ENCODE measurements at regions of chr7 and their contacts with region 1.

Region 1: GRCh38 chr7:85972504-85973141 is 671.1 kb upstream of the GRM3 start:
- DNase-seq: no peak
- ATAC-seq: no peak
- H3K4me3 ChIP-seq: no peak overlapping the region
- H3K27ac ChIP-seq: no peak overlapping the region
- H3K4me1 ChIP-seq: no peaks in the 10 kb centered on the region
- H3K27me3 ChIP-seq: no peaks in the 10 kb centered on the region
- CTCF ChIP-seq: no peak
- POLR2A ChIP-seq: no peak
- RAD21 ChIP-seq: no peak

Region 2: GRCh38 chr7:85829817-85830432 is 142.7 kb before region 1 on chr7:
- CTCF ChIA-PET with region 1: no interaction called
- POLR2A ChIA-PET with region 1: no interaction called
- RAD21 ChIA-PET with region 1: no interaction called
- intact Hi-C with region 1: no loop called
- DNase-seq: no peak
- ATAC-seq: peak; percentile 63
- H3K4me3 ChIP-seq: no peak overlapping the region
- H3K27ac ChIP-seq: no peak overlapping the region
- H3K4me1 ChIP-seq: no peaks in the 10 kb centered on the region
- H3K27me3 ChIP-seq: no peaks in the 10 kb centered on the region
- CTCF ChIP-seq: peak; percentile 12 to 55 (median 49); a peak in 4 of 6 replicates
- POLR2A ChIP-seq: no peak
- RAD21 ChIP-seq: peak; percentile 70

Region 3: GRCh38 chr7:86339051-86339450 is 366.4 kb after region 1 on chr7:
- CTCF ChIA-PET with region 1: no interaction called
- POLR2A ChIA-PET with region 1: no interaction called
- RAD21 ChIA-PET with region 1: no interaction called
- intact Hi-C with region 1: loop called (anchors 10 kb)
- DNase-seq: no peak
- ATAC-seq: no peak
- H3K4me3 ChIP-seq: no peak overlapping the region
- H3K27ac ChIP-seq: no peak overlapping the region
- H3K4me1 ChIP-seq: no peaks in the 10 kb centered on the region
- H3K27me3 ChIP-seq: no peaks in the 10 kb centered on the region
- CTCF ChIP-seq: no peak
- POLR2A ChIP-seq: no peak
- RAD21 ChIP-seq: no peak